Heart left ventricle (tissue), 16 donors: ENCODE measurements at regions of chr15 and their contacts with region 1.

Region 1: GRCh38 chr15:95932676-95933075 is 397.8 kb upstream of the NR2F2 start:
- DNase-seq: no peak
- ATAC-seq: no peak
- H3K4me3 ChIP-seq: no peak overlapping the region
- H3K27ac ChIP-seq: no peak overlapping the region
- H3K4me1 ChIP-seq: peaks cover 0 to 22% (median 2%) of the 10 kb centered on the region in 12 donors
- H3K27me3 ChIP-seq: no peaks in the 10 kb centered on the region
- CTCF ChIP-seq: no peak
- POLR2A ChIP-seq: no peak

Region 2: DNA sequence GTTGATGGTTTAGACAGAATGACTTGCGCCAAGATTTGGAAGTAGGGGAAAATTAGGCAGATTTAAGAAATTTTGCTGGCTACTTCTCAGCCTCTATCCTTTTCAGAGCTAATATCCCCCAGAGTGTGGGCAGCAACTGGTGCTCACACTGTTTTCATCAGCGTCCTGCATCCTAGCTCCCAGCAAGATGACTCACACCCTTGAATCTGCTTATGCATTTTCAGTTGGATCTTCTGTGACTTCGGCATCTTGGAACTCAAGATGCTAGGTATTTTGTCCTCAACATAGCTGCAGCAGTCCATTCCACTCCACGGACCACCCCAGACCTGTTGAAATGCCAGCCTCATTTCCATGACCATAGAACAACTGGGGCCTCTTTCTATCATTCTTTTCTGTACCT is 61.7 kb after region 1 on chr15:
- intact Hi-C with region 1: loop called in 1 of 10 experiments (anchors 10 kb)
- DNase-seq: no peak
- ATAC-seq: no peak
- H3K4me3 ChIP-seq: no peak overlapping the region
- H3K27ac ChIP-seq: no peak overlapping the region
- H3K4me1 ChIP-seq: no peaks in the 10 kb centered on the region
- H3K27me3 ChIP-seq: no peaks in the 10 kb centered on the region
- CTCF ChIP-seq: no peak
- POLR2A ChIP-seq: no peak

Region 3: GRCh38 chr15:96187341-96188305 is 254.9 kb after region 1 on chr15:
- intact Hi-C with region 1: no loop called
- DNase-seq: no peak
- ATAC-seq: no peak
- H3K4me3 ChIP-seq: no peak overlapping the region
- H3K27ac ChIP-seq: no peak overlapping the region
- H3K4me1 ChIP-seq: peaks cover 0 to 2% (median 0%) of the 10 kb centered on the region in 12 donors
- H3K27me3 ChIP-seq: no peaks in the 10 kb centered on the region
- CTCF ChIP-seq: no peak
- POLR2A ChIP-seq: no peak